Tibial artery (tissue), 4 donors: ENCODE measurements at regions of chr5 and their contacts with region 1.

Region 1: GRCh38 chr5:112860929-112861637 is at the start of gene SRP19:
- DNase-seq: peak; percentile 95 to 96
- H3K4me3 ChIP-seq: peak within 1 kb of the TSS; percentile 79 to 80
- H3K27ac ChIP-seq: peak within 1 kb of the TSS; percentile 75 to 80
- H3K4me1 ChIP-seq: peaks cover 0 to 32% (median 22%) of the 10 kb centered on the region in 4 donors
- H3K27me3 ChIP-seq: no peaks in the 10 kb centered on the region
- CTCF ChIP-seq: no peak

Region 2: DNA sequence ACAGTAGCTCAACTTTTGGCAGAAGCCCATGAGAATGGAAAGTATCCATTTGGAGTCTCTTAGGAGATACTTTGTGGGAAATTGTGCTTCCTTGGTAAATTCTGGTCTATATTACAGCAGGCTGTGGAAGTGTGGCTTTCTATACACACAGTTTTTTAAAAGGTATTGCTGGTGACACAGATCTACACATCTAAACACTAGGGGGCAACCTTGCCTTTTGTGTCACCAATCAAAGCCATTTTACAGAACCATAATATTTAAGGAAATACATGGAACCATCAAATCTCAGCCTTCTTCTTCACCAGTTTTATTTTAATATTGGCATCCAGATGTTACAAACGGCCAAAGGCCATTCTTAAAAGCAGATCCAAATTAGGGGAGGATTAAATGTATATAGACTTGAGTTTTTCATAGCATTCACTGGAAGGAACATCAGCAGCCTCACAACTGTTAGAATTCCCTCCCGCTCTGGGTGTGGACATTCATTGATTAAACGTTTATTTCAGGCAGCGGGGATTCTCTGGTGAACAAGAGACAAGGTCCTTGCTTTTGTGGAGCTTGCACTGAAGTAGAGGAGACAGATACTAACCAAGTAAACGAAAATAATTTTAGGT is 309.6 kb before region 1 on chr5:
- intact Hi-C with region 1: loop called (anchors 5 kb)
- DNase-seq: peak in 1 of 2 donors; percentile 42
- H3K4me3 ChIP-seq: no peak overlapping the region
- H3K27ac ChIP-seq: no peak overlapping the region
- H3K4me1 ChIP-seq: peaks cover 0 to 23% (median 3%) of the 10 kb centered on the region in 4 donors
- H3K27me3 ChIP-seq: no peaks in the 10 kb centered on the region
- CTCF ChIP-seq: peak; percentile 73 to 80

Region 3: GRCh38 chr5:112795944-112796678 is 65.0 kb before region 1 on chr5:
- intact Hi-C with region 1: no loop called
- DNase-seq: no peak
- H3K4me3 ChIP-seq: no peak overlapping the region
- H3K27ac ChIP-seq: no peak overlapping the region
- H3K4me1 ChIP-seq: no peaks in the 10 kb centered on the region
- H3K27me3 ChIP-seq: no peaks in the 10 kb centered on the region
- CTCF ChIP-seq: no peak

Region 4: GRCh38 chr5:112811023-112811422 is 50.1 kb before region 1 on chr5:
- intact Hi-C with region 1: no loop called
- DNase-seq: no peak
- H3K4me3 ChIP-seq: no peak overlapping the region
- H3K27ac ChIP-seq: no peak overlapping the region
- H3K4me1 ChIP-seq: no peaks in the 10 kb centered on the region
- H3K27me3 ChIP-seq: no peaks in the 10 kb centered on the region
- CTCF ChIP-seq: no peak

Region 5: DNA sequence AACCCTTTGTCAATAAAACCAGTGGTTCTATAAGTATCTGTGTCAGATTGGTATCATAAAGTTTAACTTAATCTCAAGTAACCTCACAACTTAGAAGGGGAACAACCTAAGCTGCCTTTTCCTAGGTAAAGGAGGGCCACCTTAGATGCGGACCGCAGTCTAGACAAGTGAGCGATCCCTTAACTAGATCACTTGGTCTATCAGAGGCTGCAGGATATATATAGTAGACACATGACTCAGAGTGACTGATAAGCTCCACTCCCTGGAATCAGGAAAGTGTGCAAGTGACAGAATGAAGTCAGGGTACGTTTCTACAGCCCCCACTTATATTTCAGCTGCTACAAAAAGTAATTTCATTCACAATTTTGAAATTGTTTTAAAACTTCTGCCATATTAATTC is 53.5 kb after region 1 on chr5:
- intact Hi-C with region 1: loop called (anchors 5 kb)
- DNase-seq: no peak
- H3K4me3 ChIP-seq: no peak overlapping the region
- H3K27ac ChIP-seq: peak overlapping the region; percentile 5 to 15
- H3K4me1 ChIP-seq: peaks cover 0 to 85% (median 53%) of the 10 kb centered on the region in 4 donors
- H3K27me3 ChIP-seq: no peaks in the 10 kb centered on the region
- CTCF ChIP-seq: no peak

Region 6: GRCh38 chr5:112921833-112922817 is 61.0 kb after region 1 on chr5 and contains the start of gene REEP5:
- intact Hi-C with region 1: loop called (anchors 5 kb)
- DNase-seq: peak; percentile 79 to 89
- H3K4me3 ChIP-seq: peak within 1 kb of the TSS; percentile 75 to 93
- H3K27ac ChIP-seq: peak within 1 kb of the TSS; percentile 92 to 98
- H3K4me1 ChIP-seq: peaks cover 0 to 52% (median 42%) of the 10 kb centered on the region in 4 donors
- H3K27me3 ChIP-seq: no peaks in the 10 kb centered on the region
- CTCF ChIP-seq: peak; percentile 68 to 83

Region 7: GRCh38 chr5:112960315-112960714 is 99.2 kb after region 1 on chr5:
- intact Hi-C with region 1: loop called (anchors 5 kb)
- DNase-seq: no peak
- H3K4me3 ChIP-seq: no peak overlapping the region
- H3K27ac ChIP-seq: no peak overlapping the region
- H3K4me1 ChIP-seq: peaks cover 0 to 51% (median 39%) of the 10 kb centered on the region in 4 donors
- H3K27me3 ChIP-seq: no peaks in the 10 kb centered on the region
- CTCF ChIP-seq: no peak